AG04450 (cell line): ENCODE measurements at regions of chr11 and their contacts with region 1.

Region 1: GRCh38 chr11:8717876-8718753 is 35.5 kb downstream of the RPL27A start:
- DNase-seq: peak; percentile 89
- H3K4me3 ChIP-seq: peak overlapping the region; percentile 49
- H3K27ac ChIP-seq: peak overlapping the region; percentile 96
- H3K27me3 ChIP-seq: no peaks in the 10 kb centered on the region
- CTCF ChIP-seq: no peak

Region 2: GRCh38 chr11:8688414-8689362 is 29.4 kb before region 1 on chr11:
- CTCF ChIA-PET with region 1: no interaction called
- POLR2A ChIA-PET with region 1: interaction called, 10 read pairs
- DNase-seq: peak; percentile 90
- H3K4me3 ChIP-seq: peak overlapping the region; percentile 62
- H3K27ac ChIP-seq: peak overlapping the region; percentile 62
- H3K27me3 ChIP-seq: no peaks in the 10 kb centered on the region
- CTCF ChIP-seq: no peak; the same call in 1 of the 2 replicates